ENCODE measurements at regions of chr1 and their contacts with region 1.

Region 1: GRCh38 chr1:113616156-113616555 is 143.1 kb downstream of the PHTF1 start:
- DNase-seq: no peak
- ATAC-seq: no peak
- H3K4me3 ChIP-seq: no peak overlapping the region
- H3K27ac ChIP-seq: no peak overlapping the region
- H3K4me1 ChIP-seq: no peaks in the 10 kb centered on the region
- H3K27me3 ChIP-seq: no peaks in the 10 kb centered on the region
- CTCF ChIP-seq: no peak
- EP300 ChIP-seq: no peak
- POLR2A ChIP-seq: no peak
- RAD21 ChIP-seq: no peak

Region 2: GRCh38 chr1:113488576-113489177 is 127.5 kb before region 1 on chr1:
- CTCF ChIA-PET with region 1: no interaction called
- POLR2A ChIA-PET with region 1: no interaction called
- RAD21 ChIA-PET with region 1: no interaction called
- SMC1A ChIA-PET with region 1: no interaction called
- in situ Hi-C with region 1: no loop called
- intact Hi-C with region 1: no loop called
- DNase-seq: no peak
- ATAC-seq: no peak
- H3K4me3 ChIP-seq: no peak overlapping the region
- H3K27ac ChIP-seq: no peak overlapping the region
- H3K4me1 ChIP-seq: no peaks in the 10 kb centered on the region
- H3K27me3 ChIP-seq: no peaks in the 10 kb centered on the region
- CTCF ChIP-seq: no peak
- EP300 ChIP-seq: no peak
- POLR2A ChIP-seq: no peak
- RAD21 ChIP-seq: no peak

Region 3: DNA sequence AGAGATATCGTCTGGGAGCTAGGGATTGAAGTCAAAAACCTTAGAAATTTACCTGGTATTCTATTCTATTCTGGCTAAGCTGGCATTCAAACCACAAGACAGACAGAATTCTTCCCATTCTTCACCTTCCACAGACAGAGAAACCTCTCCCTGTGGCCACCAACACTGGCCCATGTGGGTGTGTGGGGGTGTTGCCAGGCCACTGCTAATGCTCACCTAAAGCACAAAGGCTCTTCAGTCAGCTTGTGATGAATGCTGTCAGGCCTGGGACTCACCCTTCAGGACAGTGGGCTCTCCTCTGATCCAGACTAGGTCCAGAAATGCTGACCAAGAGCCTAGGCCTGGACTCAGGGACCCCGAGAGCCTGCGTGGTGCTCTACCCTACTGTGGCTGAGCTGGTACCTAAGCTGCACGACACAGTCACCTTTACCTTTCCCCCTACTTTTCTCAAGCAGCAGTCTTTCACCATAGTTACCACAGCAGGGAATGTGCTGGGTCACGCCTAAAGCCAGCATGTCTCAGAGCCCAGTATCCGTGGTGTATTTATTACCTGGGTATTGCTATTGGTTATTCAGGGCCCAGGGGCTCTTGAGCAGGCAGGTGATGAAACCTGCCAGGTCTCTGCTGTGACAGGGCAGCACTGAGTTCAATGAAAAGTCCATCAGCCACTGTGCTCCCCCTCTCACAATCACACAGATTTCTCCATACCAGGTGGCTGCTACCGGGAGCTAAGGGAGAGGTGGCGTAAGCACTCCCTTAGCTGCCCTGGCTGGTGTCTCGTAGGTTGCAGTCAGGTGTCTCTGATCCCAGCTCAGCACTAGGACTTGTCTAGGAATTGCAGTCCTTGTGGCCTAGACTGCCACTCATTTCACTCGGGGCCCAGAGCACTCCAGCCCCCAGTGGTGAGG is 14.2 kb after region 1 on chr1:
- CTCF ChIA-PET with region 1: no interaction called
- POLR2A ChIA-PET with region 1: no interaction called
- RAD21 ChIA-PET with region 1: no interaction called
- SMC1A ChIA-PET with region 1: interaction called, 13 read pairs
- in situ Hi-C with region 1: no loop called
- intact Hi-C with region 1: no loop called
- DNase-seq: no peak
- ATAC-seq: no peak
- H3K4me3 ChIP-seq: no peak overlapping the region
- H3K27ac ChIP-seq: no peak overlapping the region
- H3K4me1 ChIP-seq: no peaks in the 10 kb centered on the region
- H3K27me3 ChIP-seq: no peaks in the 10 kb centered on the region
- CTCF ChIP-seq: no peak
- EP300 ChIP-seq: no peak
- POLR2A ChIP-seq: no peak
- RAD21 ChIP-seq: no peak

Region 4: GRCh38 chr1:113677250-113678158 is 61.3 kb after region 1 on chr1:
- CTCF ChIA-PET with region 1: no interaction called
- POLR2A ChIA-PET with region 1: no interaction called
- RAD21 ChIA-PET with region 1: no interaction called
- SMC1A ChIA-PET with region 1: no interaction called
- in situ Hi-C with region 1: no loop called
- intact Hi-C with region 1: no loop called
- DNase-seq: no peak
- ATAC-seq: peak; percentile 74; the same call in 2 of the 3 replicates
- H3K4me3 ChIP-seq: no peak overlapping the region
- H3K27ac ChIP-seq: no peak overlapping the region
- H3K4me1 ChIP-seq: no peaks in the 10 kb centered on the region
- H3K27me3 ChIP-seq: no peaks in the 10 kb centered on the region
- CTCF ChIP-seq: peak; percentile 36 to 52 (median 42); a peak in 5 of 6 replicates
- EP300 ChIP-seq: no peak
- POLR2A ChIP-seq: no peak
- RAD21 ChIP-seq: peak; percentile 81

Measured in GM12878 (cell line).